ENCODE measurements at regions of chr10 and their contacts with region 1.

Region 1: GRCh38 chr10:132107186-132107948 is 41.6 kb downstream of the JAKMIP3 start:
- DNase-seq: no peak
- ATAC-seq: no peak
- H3K4me3 ChIP-seq: no peak overlapping the region
- H3K27ac ChIP-seq: no peak overlapping the region
- H3K4me1 ChIP-seq: no peaks in the 10 kb centered on the region
- H3K27me3 ChIP-seq: no peaks in the 10 kb centered on the region
- CTCF ChIP-seq: no peak

Region 2: GRCh38 chr10:132054564-132054963 is 52.8 kb before region 1 on chr10:
- intact Hi-C with region 1: loop called in 1 of 3 experiments (anchors 10 kb)
- DNase-seq: no peak
- ATAC-seq: no peak
- H3K4me3 ChIP-seq: no peak overlapping the region
- H3K27ac ChIP-seq: no peak overlapping the region
- H3K4me1 ChIP-seq: no peaks in the 10 kb centered on the region
- H3K27me3 ChIP-seq: no peaks in the 10 kb centered on the region
- CTCF ChIP-seq: no peak